GM10248 (cell line): ENCODE measurements at regions of chr13 and their contacts with region 1.

Region 1: GRCh38 chr13:42969558-42970172 is 22.4 kb downstream of the EPSTI1 start:
- DNase-seq: peak; percentile 72
- CTCF ChIP-seq: peak; percentile 80

Region 2: DNA sequence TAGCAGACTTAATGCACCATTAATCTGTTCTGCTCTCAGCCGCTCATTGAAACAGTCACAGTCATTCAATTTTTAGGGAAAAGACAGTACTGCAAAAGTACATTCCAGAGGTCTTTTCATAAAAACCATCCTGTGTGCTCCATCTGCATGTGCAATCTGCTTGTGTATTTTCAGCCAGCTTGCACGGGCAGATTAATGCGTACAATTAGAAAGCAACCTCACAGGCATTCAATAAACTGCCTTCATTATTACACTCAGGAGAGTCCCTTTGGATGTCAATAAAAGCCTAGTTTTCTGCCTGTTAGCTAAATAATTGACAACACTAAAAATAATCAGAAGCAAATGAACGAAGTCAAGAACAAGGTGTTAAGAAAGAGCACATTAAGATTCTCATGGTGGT is 19.5 kb before region 1 on chr13:
- CTCF ChIA-PET with region 1: interaction called, 16 read pairs
- POLR2A ChIA-PET with region 1: no interaction called
- DNase-seq: no peak
- CTCF ChIP-seq: no peak

Region 3: DNA sequence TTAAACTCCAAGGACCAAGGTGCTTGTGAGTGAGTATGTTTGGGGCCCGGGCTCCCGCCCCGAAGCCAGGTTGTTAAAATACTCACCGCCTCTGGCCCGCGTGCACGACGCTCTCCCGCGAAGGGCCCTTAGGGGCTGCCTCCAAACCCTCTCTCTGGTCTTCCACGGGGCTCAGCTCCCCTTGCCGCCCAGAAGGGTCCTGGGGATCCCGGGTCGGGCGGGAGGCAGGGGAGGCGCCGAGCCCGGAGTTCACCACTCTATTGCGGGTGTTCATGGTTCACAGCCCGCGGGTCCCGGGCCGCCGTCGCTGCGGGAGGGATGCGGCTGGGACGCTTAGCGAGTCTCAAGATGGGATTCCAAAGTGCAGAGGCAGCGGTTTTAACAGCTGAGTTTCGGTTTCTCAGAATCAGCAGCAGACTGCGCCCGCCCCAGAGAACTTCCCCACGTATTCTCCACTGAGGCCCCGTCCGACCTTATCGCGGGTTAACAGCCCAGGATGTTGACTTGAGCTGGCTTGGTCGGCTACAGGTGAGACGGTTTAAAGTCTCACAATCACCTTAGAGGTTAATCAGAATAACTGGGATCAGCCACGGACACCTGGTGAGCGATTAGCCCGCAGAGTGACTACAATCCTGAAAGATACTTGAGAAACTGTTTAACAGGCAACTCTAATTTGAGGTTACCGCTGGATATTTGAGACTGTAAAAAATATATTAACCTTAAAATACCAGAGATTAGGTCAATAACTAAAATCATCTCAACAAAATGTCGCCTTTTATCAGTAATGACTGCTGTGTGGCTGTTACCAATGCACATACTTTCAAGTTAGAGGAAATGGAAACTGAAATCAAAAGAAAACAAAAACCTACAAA is 22.5 kb after region 1 on chr13 and contains the start of gene EPSTI1:
- CTCF ChIA-PET with region 1: interaction called, 22 read pairs
- POLR2A ChIA-PET with region 1: no interaction called
- DNase-seq: peak; percentile 74
- CTCF ChIP-seq: no peak

Region 4: DNA sequence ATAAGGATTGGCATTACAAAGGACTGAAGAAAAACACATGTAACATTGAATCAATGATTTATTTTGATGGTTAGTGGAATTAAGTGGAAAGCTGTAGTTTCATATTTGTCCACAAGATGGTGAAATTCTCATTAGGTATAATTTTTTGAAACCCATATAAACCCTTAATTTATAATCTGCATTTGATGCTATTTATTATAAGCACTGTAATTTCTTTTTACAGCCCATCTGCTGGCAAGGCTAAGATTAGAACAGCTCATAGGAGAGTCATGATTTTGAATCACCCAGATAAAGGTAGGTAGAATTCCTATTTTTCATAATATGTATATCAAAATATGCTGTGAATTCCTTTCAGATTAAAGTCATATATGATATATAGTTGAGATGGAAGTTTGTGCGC is 115.9 kb after region 1 on chr13:
- CTCF ChIA-PET with region 1: interaction called, 10 read pairs
- POLR2A ChIA-PET with region 1: no interaction called
- DNase-seq: no peak
- CTCF ChIP-seq: peak; percentile 26

Region 5: DNA sequence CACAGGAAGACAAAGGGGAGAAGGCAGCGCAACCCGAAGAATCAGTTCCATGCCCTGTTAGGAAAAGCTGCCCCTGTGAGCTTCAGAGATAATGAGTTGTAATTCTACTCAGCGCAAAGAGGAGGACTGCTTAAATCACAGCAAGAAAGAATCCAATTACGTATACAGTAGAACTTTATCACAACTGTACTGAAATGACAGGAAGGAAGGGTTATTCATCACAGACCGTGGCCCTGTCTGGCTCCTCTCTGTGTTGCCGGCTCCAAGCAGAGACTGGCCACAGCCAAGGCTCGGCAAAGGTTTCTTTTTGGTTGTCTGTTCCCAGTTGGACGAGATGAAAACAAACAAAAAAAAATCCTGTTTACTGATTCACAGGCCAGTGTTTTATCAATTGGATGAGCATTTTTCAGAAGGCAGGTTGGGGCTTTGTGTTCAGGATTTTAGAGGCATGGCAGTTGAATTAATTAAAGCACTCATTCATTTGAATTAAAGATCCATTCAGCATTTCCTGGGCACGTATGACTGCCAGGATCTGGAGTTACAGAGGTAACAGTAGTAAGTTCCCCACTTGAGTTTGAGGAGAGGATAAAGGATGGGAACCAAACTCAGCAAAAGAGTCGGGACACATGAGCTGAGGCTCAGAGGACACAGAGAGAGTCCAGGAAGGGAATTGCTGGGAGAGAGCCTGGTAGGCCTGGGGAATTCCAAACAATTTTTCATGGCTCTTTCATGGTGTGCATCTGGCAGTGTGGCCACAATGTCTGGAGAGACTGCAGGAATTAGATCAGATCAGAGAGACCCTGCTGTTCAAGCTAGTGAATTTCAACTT is 394.8 kb after region 1 on chr13:
- CTCF ChIA-PET with region 1: no interaction called
- POLR2A ChIA-PET with region 1: no interaction called
- DNase-seq: no peak
- CTCF ChIP-seq: no peak

Region 6: GRCh38 chr13:43422116-43422515 is 452.5 kb after region 1 on chr13:
- CTCF ChIA-PET with region 1: no interaction called
- POLR2A ChIA-PET with region 1: no interaction called
- DNase-seq: no peak
- CTCF ChIP-seq: no peak

Region 7: GRCh38 chr13:43804461-43805070 is 834.9 kb after region 1 on chr13:
- CTCF ChIA-PET with region 1: interaction called, 13 read pairs
- POLR2A ChIA-PET with region 1: no interaction called
- DNase-seq: peak; percentile 43
- CTCF ChIP-seq: peak; percentile 44